ENCODE measurements at regions of chr17 and their contacts with region 1.

Region 1: GRCh38 chr17:81253358-81254131 is 14.4 kb downstream of the NDUFAF8 start:
- DNase-seq: peak; percentile 40
- H3K4me3 ChIP-seq: no peak overlapping the region
- H3K27ac ChIP-seq: no peak overlapping the region
- H3K4me1 ChIP-seq: peaks cover 15 to 56% (median 45%) of the 10 kb centered on the region in 4 donors
- H3K27me3 ChIP-seq: no peaks in the 10 kb centered on the region
- CTCF ChIP-seq: peak; percentile 78 to 97 (median 82)
- EP300 ChIP-seq: no peak
- POLR2A ChIP-seq: no peak

Region 2: GRCh38 chr17:81150377-81151077 is 103.0 kb before region 1 on chr17:
- in situ Hi-C with region 1: no loop called
- intact Hi-C with region 1: no loop called
- DNase-seq: peak; percentile 27
- H3K4me3 ChIP-seq: no peak overlapping the region
- H3K27ac ChIP-seq: no peak overlapping the region
- H3K4me1 ChIP-seq: no peaks in the 10 kb centered on the region
- H3K27me3 ChIP-seq: no peaks in the 10 kb centered on the region
- CTCF ChIP-seq: no peak
- EP300 ChIP-seq: no peak
- POLR2A ChIP-seq: no peak

Region 3: DNA sequence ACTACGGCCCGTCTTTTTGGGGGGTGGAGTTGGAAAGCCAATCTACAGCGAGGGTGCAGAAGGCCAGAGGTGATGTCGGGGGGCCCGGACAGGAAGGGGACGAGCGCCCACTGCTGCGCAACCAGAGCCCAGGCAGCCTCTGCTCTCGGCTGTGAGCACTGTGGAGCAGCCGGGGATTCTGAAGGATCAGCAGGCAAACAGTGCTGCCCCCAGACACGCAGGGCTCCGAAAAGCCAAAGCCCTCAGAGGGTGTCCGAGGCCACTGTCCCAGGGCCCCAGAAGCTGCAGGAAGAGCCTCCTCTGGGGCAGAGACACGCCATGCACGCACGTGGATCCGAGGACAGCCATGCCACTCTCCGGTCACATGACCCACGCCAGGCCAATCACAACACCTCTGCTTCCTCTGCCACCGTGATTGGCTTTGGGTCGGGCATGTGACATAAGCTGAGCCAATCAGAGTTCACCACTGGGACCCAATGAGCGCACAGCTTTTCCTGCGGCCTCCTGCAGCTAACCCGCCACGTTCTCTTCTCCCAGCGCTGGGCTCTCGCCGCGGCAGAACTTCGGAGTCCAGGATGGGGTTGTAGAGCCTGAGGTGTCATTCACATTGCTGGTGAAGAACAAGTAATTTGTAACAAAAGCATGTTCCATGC is 218.4 kb after region 1 on chr17:
- in situ Hi-C with region 1: loop called in 3 of 4 experiments (anchors 10 to 25 kb)
- intact Hi-C with region 1: no loop called
- DNase-seq: peak; percentile 62
- H3K4me3 ChIP-seq: peak overlapping the region in 1 of 4 donors; percentile 27
- H3K27ac ChIP-seq: peak overlapping the region; percentile 15 to 59 (median 46)
- H3K4me1 ChIP-seq: no peaks in the 10 kb centered on the region
- H3K27me3 ChIP-seq: no peaks in the 10 kb centered on the region
- CTCF ChIP-seq: peak; percentile 20 to 41 (median 34)
- EP300 ChIP-seq: no peak
- POLR2A ChIP-seq: no peak

Region 4: GRCh38 chr17:81537343-81537855 is 283.9 kb after region 1 on chr17:
- in situ Hi-C with region 1: no loop called
- intact Hi-C with region 1: loop called (anchors 10 kb)
- DNase-seq: peak; percentile 67
- H3K4me3 ChIP-seq: no peak overlapping the region
- H3K27ac ChIP-seq: no peak overlapping the region
- H3K4me1 ChIP-seq: peaks cover 7 to 17% (median 11%) of the 10 kb centered on the region in 4 donors
- H3K27me3 ChIP-seq: peaks cover 25% of the 10 kb centered on the region
- CTCF ChIP-seq: peak; percentile 54 to 92 (median 77)
- EP300 ChIP-seq: no peak
- POLR2A ChIP-seq: no peak

Region 5: GRCh38 chr17:81601525-81602120 is 348.1 kb after region 1 on chr17:
- in situ Hi-C with region 1: loop called in 1 of 4 experiments (anchors 25 kb)
- intact Hi-C with region 1: loop called (anchors 5 kb)
- DNase-seq: peak; percentile 31
- H3K4me3 ChIP-seq: no peak overlapping the region
- H3K27ac ChIP-seq: no peak overlapping the region
- H3K4me1 ChIP-seq: peaks cover 0 to 13% (median 3%) of the 10 kb centered on the region in 4 donors
- H3K27me3 ChIP-seq: no peaks in the 10 kb centered on the region
- CTCF ChIP-seq: peak; percentile 64 to 86 (median 76)
- EP300 ChIP-seq: no peak
- POLR2A ChIP-seq: no peak

Measured in transverse colon (tissue), 4 donors.